ENCODE measurements at regions of chr6 and their contacts with region 1.

Region 1: GRCh38 chr6:161273752-161274487 is at the start of gene AGPAT4:
- DNase-seq: peak; percentile 88
- ATAC-seq: peak; percentile 97
- H3K4me3 ChIP-seq: peak within 1 kb of the TSS; percentile 48 to 91 (median 73)
- H3K4me3 Mint-ChIP-seq: peak within 1 kb of the TSS; percentile 90
- H3K27ac ChIP-seq: peak within 1 kb of the TSS; percentile 65 to 74
- H3K27ac Mint-ChIP-seq: peak within 1 kb of the TSS; percentile 83
- H3K4me1 ChIP-seq: peaks cover 6 to 15% of the 10 kb centered on the region in 2 donors
- H3K4me1 Mint-ChIP-seq: peaks cover 18% of the 10 kb centered on the region
- H3K27me3 ChIP-seq: peaks cover 0 to 5% (median 0%) of the 10 kb centered on the region in 4 experiments
- H3K27me3 Mint-ChIP-seq: peaks cover 18% of the 10 kb centered on the region
- CTCF ChIP-seq: no peak
- total RNA-seq, gene AGPAT4: 6.0 and 6.1 TPM in 2 replicates

Region 2: GRCh38 chr6:160930547-160931377 is 343.2 kb before region 1 on chr6:
- CTCF ChIA-PET with region 1: no interaction called
- POLR2A ChIA-PET with region 1: no interaction called
- intact Hi-C with region 1: loop called (anchors 5 kb)
- DNase-seq: peak; percentile 52
- ATAC-seq: no peak
- H3K4me3 ChIP-seq: no peak overlapping the region
- H3K4me3 Mint-ChIP-seq: peak overlapping the region; percentile 43
- H3K27ac ChIP-seq: no peak overlapping the region
- H3K27ac Mint-ChIP-seq: no peak overlapping the region
- H3K4me1 ChIP-seq: peaks cover 3 to 6% of the 10 kb centered on the region in 2 donors
- H3K4me1 Mint-ChIP-seq: peaks cover 6% of the 10 kb centered on the region
- H3K27me3 ChIP-seq: peaks cover 0 to 19% (median 6%) of the 10 kb centered on the region in 4 experiments
- H3K27me3 Mint-ChIP-seq: peaks cover 45% of the 10 kb centered on the region
- CTCF ChIP-seq: peak; percentile 75

Region 3: DNA sequence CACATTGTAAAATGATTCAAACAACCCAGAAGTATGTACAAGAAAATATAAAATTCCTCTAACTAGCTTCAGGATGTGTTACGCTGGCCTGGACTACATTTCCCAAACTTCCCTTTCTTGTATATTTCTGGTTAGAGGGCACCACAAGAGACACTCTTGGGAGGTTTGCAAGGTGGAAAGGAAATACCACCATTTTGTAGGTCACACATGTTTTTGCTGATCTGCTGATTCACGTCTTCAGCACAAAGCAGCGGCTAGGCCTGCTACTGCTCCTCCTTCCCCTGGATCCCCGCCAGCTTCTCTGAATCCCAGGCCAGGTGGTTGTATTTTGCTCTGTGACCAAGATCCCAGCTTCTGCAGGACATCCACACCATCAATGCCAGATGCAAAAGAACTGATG is 104.2 kb before region 1 on chr6:
- CTCF ChIA-PET with region 1: no interaction called
- POLR2A ChIA-PET with region 1: no interaction called
- intact Hi-C with region 1: loop called (anchors 5 kb)
- DNase-seq: no peak
- ATAC-seq: no peak
- H3K4me3 ChIP-seq: peak overlapping the region in 1 of 5 experiments; percentile 15
- H3K4me3 Mint-ChIP-seq: peak overlapping the region; percentile 79
- H3K27ac ChIP-seq: peak overlapping the region in 1 of 2 donors; percentile 39
- H3K27ac Mint-ChIP-seq: peak overlapping the region; percentile 78
- H3K4me1 ChIP-seq: peaks cover 29 to 30% of the 10 kb centered on the region in 2 donors
- H3K4me1 Mint-ChIP-seq: peaks cover 31% of the 10 kb centered on the region
- H3K27me3 ChIP-seq: no peaks in the 10 kb centered on the region
- H3K27me3 Mint-ChIP-seq: no peaks in the 10 kb centered on the region
- CTCF ChIP-seq: no peak